Activated B cell treated with CpG ODN at 0.5 μM for 24 hours (primary cell): ENCODE measurements at regions of chr1 and their contacts with region 1.

Region 1: DNA sequence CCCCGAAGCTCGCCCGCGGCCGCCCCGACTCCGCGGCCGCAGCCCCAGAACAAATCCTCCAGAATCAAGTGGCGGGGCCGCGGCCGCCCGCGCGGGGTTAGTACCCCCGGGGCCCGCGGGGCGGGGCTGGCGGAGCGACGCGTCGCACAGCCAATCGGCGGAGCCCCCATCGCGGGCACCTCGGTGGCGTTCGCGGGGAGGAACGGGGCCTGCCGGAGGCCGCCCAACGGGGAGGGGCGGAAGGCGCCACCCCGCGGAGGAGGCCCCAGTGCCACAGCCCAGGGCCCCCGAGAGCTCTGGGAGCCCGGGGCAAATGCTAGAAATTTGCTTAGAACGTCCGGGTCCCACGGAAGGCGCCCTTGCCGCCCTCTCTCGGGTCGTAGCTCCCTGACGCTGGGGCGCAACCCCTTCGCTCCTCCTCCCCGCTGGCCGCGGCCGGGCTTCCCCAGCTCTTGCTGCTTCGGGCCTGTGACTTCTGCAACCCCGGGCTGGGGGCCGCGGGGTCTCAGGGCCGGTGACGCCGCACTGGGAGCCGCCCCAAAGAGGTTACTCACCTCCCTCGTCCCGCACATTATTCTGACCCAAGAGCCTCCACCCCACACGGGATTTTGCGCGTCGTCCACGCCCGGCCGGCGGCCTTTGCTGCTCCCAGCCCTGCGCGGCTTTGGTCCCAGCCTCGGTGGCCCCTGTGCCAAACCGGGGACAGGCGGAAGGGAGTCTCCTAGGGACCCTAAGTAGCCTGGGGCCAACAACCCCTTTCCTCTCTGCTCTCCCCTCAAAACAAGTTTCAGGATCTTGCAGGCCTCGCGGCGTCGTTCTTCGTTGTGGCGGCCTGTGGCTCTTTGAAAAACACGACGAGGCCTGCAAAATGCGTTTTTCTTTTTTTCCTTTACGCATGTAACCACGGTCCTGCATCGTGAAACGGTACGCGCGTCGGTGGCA is at the start of gene RUNX3:
- DNase-seq: peak; percentile 94
- ATAC-seq: peak; percentile 87
- H3K4me3 Mint-ChIP-seq: peak within 1 kb of the TSS; percentile 98
- H3K27ac Mint-ChIP-seq: peak within 1 kb of the TSS; percentile 96
- H3K4me1 Mint-ChIP-seq: peaks cover 73% of the 10 kb centered on the region
- H3K27me3 Mint-ChIP-seq: no peaks in the 10 kb centered on the region
- CTCF ChIP-seq: no peak
- total RNA-seq, gene RUNX3: 141 and 153 TPM in 2 replicates

Region 2: GRCh38 chr1:24186993-24187805 is 743.3 kb before region 1 on chr1 and contains the start of gene IFNLR1:
- CTCF ChIA-PET with region 1: no interaction called
- POLR2A ChIA-PET with region 1: interaction called, 11 read pairs
- intact Hi-C with region 1: loop called (anchors 10 kb)
- DNase-seq: peak; percentile 73
- ATAC-seq: peak; percentile 56
- H3K4me3 Mint-ChIP-seq: peak within 1 kb of the TSS; percentile 92
- H3K27ac Mint-ChIP-seq: peak within 1 kb of the TSS; percentile 98
- H3K4me1 Mint-ChIP-seq: peaks cover 82% of the 10 kb centered on the region
- H3K27me3 Mint-ChIP-seq: no peaks in the 10 kb centered on the region
- CTCF ChIP-seq: no peak
- total RNA-seq, gene IFNLR1: 38.6 and 39.2 TPM in 2 replicates

Region 3: GRCh38 chr1:24744911-24745710 is 185.4 kb before region 1 on chr1 and contains the start of gene CLIC4:
- CTCF ChIA-PET with region 1: no interaction called
- POLR2A ChIA-PET with region 1: interaction called, 7 read pairs
- intact Hi-C with region 1: loop called (anchors 2 kb)
- DNase-seq: peak; percentile 99
- ATAC-seq: peak; percentile 78
- H3K4me3 Mint-ChIP-seq: peak within 1 kb of the TSS; percentile 95
- H3K27ac Mint-ChIP-seq: peak within 1 kb of the TSS; percentile 99
- H3K4me1 Mint-ChIP-seq: peaks cover 73% of the 10 kb centered on the region
- H3K27me3 Mint-ChIP-seq: no peaks in the 10 kb centered on the region
- CTCF ChIP-seq: no peak
- total RNA-seq, gene CLIC4: 98.2 and 99.8 TPM in 2 replicates

Region 4: GRCh38 chr1:24955161-24955560 is 24.7 kb after region 1 on chr1:
- CTCF ChIA-PET with region 1: interaction called, 8 read pairs
- POLR2A ChIA-PET with region 1: interaction called, 16 read pairs
- intact Hi-C with region 1: loop called (anchors 1 kb)
- DNase-seq: no peak
- ATAC-seq: peak; percentile 76
- H3K4me3 Mint-ChIP-seq: peak overlapping the region; percentile 78
- H3K27ac Mint-ChIP-seq: peak overlapping the region; percentile 87
- H3K4me1 Mint-ChIP-seq: peaks cover 87% of the 10 kb centered on the region
- H3K27me3 Mint-ChIP-seq: no peaks in the 10 kb centered on the region
- CTCF ChIP-seq: no peak

Region 5: GRCh38 chr1:25037174-25038074 is 106.9 kb after region 1 on chr1:
- CTCF ChIA-PET with region 1: interaction called, 195 read pairs
- POLR2A ChIA-PET with region 1: interaction called, 385 read pairs
- intact Hi-C with region 1: loop called (anchors 1 kb)
- DNase-seq: peak; percentile 64
- ATAC-seq: peak; percentile 56
- H3K4me3 Mint-ChIP-seq: no peak overlapping the region
- H3K27ac Mint-ChIP-seq: peak overlapping the region; percentile 46
- H3K4me1 Mint-ChIP-seq: peaks cover 9% of the 10 kb centered on the region
- H3K27me3 Mint-ChIP-seq: no peaks in the 10 kb centered on the region
- CTCF ChIP-seq: no peak

Region 6: GRCh38 chr1:25204797-25205480 is 274.5 kb after region 1 on chr1:
- CTCF ChIA-PET with region 1: interaction called, 4 read pairs
- POLR2A ChIA-PET with region 1: interaction called, 3 read pairs
- intact Hi-C with region 1: loop called (anchors 2 kb)
- DNase-seq: no peak
- ATAC-seq: peak; percentile 47
- H3K4me3 Mint-ChIP-seq: no peak overlapping the region
- H3K27ac Mint-ChIP-seq: no peak overlapping the region
- H3K4me1 Mint-ChIP-seq: no peaks in the 10 kb centered on the region
- H3K27me3 Mint-ChIP-seq: peaks cover 2% of the 10 kb centered on the region
- CTCF ChIP-seq: no peak